Activated naive CD8-positive, alpha-beta T cell treated with anti-CD3 and anti-CD28 coated beads, Interleukin-2, amount 10 ng/mL, durations not matched to agents 7 days and 5 days (primary cell): ENCODE measurements at regions of chrX and their contacts with region 1.

Region 1: GRCh38 chrX:119693040-119693995 is at the start of gene SEPTIN6:
- DNase-seq: peak; percentile 85
- ATAC-seq: peak; percentile 70
- H3K4me3 Mint-ChIP-seq: peak within 1 kb of the TSS; percentile 98
- H3K27ac Mint-ChIP-seq: peak within 1 kb of the TSS; percentile 98
- H3K4me1 Mint-ChIP-seq: peaks cover 17% of the 10 kb centered on the region
- H3K27me3 Mint-ChIP-seq: no peaks in the 10 kb centered on the region
- total RNA-seq, gene SEPTIN6: 257 to 274 TPM

Region 2: GRCh38 chrX:119606280-119607015 is 86.9 kb before region 1 on chrX and contains the start of gene NKRF:
- POLR2A ChIA-PET with region 1: interaction called, 11 read pairs
- DNase-seq: peak; percentile 88
- ATAC-seq: peak; percentile 77
- H3K4me3 Mint-ChIP-seq: peak within 1 kb of the TSS; percentile 99
- H3K27ac Mint-ChIP-seq: peak within 1 kb of the TSS; percentile 95
- H3K4me1 Mint-ChIP-seq: peaks cover 21% of the 10 kb centered on the region
- H3K27me3 Mint-ChIP-seq: peaks cover 2% of the 10 kb centered on the region
- total RNA-seq, gene NKRF: 14.3 to 14.4 TPM

Region 3: DNA sequence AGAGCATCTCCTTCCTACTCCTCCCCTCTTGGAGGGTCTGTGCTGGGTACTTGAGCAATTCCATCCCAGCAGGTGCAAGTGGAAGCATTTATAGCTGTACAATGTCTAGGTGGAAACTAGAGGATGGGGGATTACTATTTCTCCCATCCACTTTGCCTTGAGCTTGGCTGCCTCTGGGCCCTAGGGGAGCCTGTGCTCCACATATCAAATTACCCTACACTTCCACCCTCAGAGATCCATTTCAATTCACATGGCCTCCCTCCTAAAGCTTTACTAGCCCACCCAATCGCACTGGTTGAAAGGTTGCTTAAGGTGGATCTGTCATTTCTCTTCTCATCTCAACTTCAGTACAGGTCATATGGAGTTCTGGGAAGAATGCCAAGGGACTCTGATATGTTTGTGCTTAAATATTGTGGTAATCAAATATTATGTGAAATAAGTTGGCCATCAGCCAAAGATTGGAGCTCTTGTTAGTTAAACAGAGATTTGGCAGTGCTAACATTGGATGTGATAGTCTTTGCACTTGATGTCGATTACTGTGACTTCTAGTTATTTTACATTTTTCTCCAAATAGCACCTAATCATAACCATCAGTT is 21.0 kb before region 1 on chrX:
- POLR2A ChIA-PET with region 1: interaction called, 191 read pairs
- DNase-seq: no peak
- ATAC-seq: no peak
- H3K4me3 Mint-ChIP-seq: no peak overlapping the region
- H3K27ac Mint-ChIP-seq: peak overlapping the region; percentile 51
- H3K4me1 Mint-ChIP-seq: peaks cover 22% of the 10 kb centered on the region
- H3K27me3 Mint-ChIP-seq: no peaks in the 10 kb centered on the region

Region 4: DNA sequence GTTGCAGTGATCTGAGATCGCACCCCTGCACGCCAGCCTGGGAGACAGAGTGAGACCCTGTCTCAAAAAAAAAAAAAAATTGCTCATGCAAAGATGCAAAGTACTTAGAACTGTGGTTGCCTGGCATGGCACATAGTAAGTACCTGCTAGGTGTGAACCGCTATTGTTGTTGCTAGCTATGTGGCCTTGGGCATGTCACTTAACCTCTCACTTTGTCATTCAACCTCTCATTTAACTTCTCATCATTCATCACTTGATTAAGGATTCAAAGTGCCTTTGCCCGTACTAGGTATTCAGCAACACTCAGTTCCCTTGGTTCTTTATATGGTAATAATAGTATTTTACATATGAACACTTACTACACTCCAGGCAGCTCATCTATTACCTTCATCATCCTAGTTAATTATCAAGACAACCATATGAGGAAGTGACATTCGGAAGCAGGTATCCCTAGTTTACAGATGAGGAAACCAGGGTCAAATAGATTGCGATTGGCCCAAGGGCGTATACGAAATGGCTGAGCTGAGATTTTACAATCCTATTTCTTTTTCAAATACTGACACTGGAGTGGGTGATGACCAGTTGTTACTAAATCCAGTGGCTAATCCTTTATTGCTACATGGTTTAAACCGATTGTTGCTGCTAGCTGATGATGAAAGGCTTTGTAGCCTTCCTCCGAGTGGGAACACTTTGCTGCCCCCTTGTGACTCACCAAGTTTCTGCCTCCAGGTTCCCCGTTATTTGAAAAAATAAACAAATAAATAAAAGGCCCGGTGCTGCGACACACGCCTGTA is 36.3 kb after region 1 on chrX:
- POLR2A ChIA-PET with region 1: interaction called, 22 read pairs
- DNase-seq: peak; percentile 49
- ATAC-seq: no peak
- H3K4me3 Mint-ChIP-seq: no peak overlapping the region
- H3K27ac Mint-ChIP-seq: no peak overlapping the region
- H3K4me1 Mint-ChIP-seq: peaks cover 10% of the 10 kb centered on the region
- H3K27me3 Mint-ChIP-seq: no peaks in the 10 kb centered on the region

Region 5: DNA sequence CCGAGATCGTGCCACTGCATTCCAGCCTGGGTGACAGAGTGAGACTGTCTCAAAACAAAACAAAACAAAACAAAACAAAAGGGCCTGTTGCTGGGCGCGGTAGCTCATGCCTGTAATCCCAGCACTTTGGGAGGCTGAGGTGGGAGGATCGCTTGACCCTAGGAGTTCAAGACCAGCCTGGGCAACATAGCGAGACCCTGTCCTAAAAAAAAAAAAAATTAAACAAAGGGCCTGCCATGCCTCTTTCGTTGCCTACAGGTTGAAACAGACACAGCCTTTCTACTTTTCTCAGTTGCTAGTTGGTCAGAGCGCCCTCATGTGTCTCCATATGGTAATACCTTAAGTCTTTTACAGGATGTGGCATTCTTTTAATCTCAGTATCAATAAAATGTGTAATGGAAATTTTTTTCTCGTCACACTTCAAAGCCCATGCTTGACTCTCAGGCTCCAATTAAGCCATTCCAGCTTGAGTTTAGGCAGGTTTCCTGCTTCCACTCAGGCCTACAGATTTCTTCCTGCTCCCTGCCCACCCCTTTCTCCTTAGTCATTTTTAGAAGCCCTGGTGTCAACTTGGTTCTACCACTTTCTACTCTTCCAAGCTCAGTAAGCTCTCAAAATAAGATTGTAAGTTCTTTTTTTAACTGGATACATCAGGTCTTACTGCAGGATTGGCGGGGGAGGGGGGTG is 60.4 kb after region 1 on chrX:
- POLR2A ChIA-PET with region 1: interaction called, 59 read pairs
- DNase-seq: no peak
- ATAC-seq: peak; percentile 28
- H3K4me3 Mint-ChIP-seq: peak overlapping the region; percentile 40
- H3K27ac Mint-ChIP-seq: peak overlapping the region; percentile 91
- H3K4me1 Mint-ChIP-seq: peaks cover 38% of the 10 kb centered on the region
- H3K27me3 Mint-ChIP-seq: no peaks in the 10 kb centered on the region